ENCODE measurements at regions of chr12 and their contacts with region 1.

Region 1: DNA sequence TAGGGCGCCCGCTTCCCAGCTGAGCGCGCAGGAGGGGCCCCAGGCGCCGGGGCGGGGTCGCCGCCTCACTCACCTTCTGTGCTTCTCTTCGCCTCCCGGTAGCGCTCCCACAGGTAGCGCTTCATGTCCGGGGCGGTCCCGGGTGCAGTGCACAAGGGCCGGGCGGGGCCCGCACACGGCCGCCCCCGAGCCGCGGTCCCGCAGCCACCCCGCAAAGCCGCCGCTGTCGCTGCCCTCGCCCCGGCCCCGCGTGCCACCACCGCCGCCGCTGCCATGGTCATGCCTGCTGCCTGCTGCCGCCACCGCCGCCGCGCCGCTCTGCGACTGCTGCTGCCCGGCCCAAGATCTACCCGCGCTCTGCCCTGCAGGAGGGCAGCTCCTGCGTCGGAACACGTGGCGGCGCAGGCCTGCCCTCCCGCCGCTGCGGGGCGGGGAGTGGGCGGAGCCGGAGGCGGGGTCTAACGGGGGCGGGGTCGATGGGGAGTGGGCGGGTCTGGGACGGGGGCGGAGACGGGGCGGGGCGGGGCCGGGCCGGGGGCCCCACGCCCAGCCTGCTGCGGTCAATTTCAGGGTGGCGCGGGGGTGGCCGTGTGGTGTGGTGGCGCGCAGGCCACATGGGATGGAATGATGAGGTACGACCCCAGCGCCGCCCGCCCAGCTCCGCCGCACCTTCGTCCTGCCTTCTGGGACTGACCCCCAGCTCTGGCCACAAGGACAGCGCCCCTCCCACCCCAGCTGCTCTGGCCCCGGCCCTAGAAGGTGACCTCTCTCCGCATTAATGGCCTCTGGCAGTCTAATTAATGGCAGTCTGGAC is at the start of gene NT5DC3:
- DNase-seq: peak; percentile 82
- H3K4me3 Mint-ChIP-seq: peak within 1 kb of the TSS; percentile 81
- H3K27ac Mint-ChIP-seq: no peak within 1 kb of the TSS
- H3K4me1 Mint-ChIP-seq: peaks cover 21% of the 10 kb centered on the region
- H3K27me3 Mint-ChIP-seq: no peaks in the 10 kb centered on the region
- total RNA-seq, gene NT5DC3: 6.0 to 6.4 TPM

Region 2: DNA sequence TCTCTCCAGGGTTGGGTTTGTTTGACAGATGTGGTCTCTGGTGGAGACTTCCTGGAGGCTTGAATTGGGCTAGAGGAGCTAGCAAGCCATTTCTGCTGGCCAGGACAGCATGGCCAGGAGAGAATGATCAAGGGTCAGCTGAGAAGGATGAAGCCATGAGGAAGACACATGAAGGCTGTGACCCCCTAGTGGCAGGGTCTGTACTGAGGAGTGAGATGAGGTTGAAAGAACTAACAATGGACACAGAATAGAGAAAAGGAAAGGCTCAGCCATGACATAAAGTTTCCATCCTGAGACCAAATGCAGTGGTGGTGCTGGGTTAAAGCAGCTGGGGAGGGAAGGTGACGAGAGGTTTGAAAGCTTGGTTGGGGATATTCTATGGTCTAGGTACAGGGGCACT is 89.9 kb before region 1 on chr12:
- CTCF ChIA-PET with region 1: no interaction called
- intact Hi-C with region 1: no loop called
- DNase-seq: no peak
- H3K4me3 Mint-ChIP-seq: no peak overlapping the region
- H3K27ac Mint-ChIP-seq: no peak overlapping the region
- H3K4me1 Mint-ChIP-seq: no peaks in the 10 kb centered on the region
- H3K27me3 Mint-ChIP-seq: peaks cover 2% of the 10 kb centered on the region

Region 3: GRCh38 chr12:104137913-104138796 is 297.1 kb after region 1 on chr12 and contains the start of gene NFYB:
- CTCF ChIA-PET with region 1: no interaction called
- intact Hi-C with region 1: loop called (anchors 1 kb)
- DNase-seq: peak; percentile 95
- H3K4me3 Mint-ChIP-seq: peak within 1 kb of the TSS; percentile 84
- H3K27ac Mint-ChIP-seq: peak within 1 kb of the TSS; percentile 84
- H3K4me1 Mint-ChIP-seq: peaks cover 14% of the 10 kb centered on the region
- H3K27me3 Mint-ChIP-seq: no peaks in the 10 kb centered on the region
- total RNA-seq, gene NFYB: 23.3 to 28.3 TPM

Region 4: DNA sequence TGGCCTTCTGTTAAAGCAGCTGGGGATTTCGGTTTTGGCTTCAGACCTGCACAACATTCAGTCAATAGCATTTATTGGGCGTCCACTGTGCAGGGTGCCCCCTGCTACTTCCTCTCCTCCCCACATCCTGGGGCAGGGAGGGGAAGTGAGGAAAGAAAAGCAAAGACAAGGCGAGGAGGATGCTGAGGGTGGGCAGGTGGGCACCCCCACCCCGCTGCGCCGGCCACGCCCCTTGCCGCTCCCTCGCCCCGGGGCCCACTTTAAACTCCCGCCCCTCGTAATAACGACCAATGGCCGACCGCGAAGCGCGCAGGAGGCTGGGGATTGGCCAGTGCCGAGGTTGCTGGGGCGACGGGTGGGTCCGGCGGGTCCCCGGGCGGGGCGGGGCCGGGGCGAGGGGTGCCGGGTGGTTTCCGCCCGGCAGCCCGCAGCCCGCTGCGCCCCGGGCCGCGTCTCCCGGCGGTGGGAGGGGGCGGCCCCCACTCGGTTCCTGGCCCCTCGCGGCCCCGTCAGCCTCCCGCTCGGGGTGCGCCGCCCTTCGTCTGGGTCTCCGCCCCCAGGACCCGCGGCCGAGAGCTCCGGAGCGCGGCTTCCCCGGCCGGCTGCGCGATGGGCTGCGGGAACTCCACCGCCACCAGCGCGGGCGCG is 1489.3 kb after region 1 on chr12 and contains the start of gene C12orf75:
- CTCF ChIA-PET with region 1: no interaction called
- intact Hi-C with region 1: loop called (anchors 10 kb)
- DNase-seq: peak; percentile 86
- H3K4me3 Mint-ChIP-seq: peak within 1 kb of the TSS; percentile 76
- H3K27ac Mint-ChIP-seq: peak within 1 kb of the TSS; percentile 14
- H3K4me1 Mint-ChIP-seq: peaks cover 35% of the 10 kb centered on the region
- H3K27me3 Mint-ChIP-seq: no peaks in the 10 kb centered on the region
- total RNA-seq, gene C12orf75: 41.1 to 48.5 TPM

Measured in activated naive CD4-positive, alpha-beta T cell treated with anti-CD3 and anti-CD28 coated beads for 36 hours (primary cell).